Sigmoid colon (tissue), 7 donors: ENCODE measurements at regions of chr2 and their contacts with region 1.

Region 1: GRCh38 chr2:224357098-224357901 is 44.6 kb downstream of the FAM124B start:
- DNase-seq: no peak
- H3K4me3 ChIP-seq: no peak overlapping the region
- H3K27ac ChIP-seq: no peak overlapping the region
- H3K4me1 ChIP-seq: no peaks in the 10 kb centered on the region
- H3K27me3 ChIP-seq: no peaks in the 10 kb centered on the region
- CTCF ChIP-seq: peak; percentile 61 to 79 (median 70)
- EP300 ChIP-seq: no peak
- POLR2A ChIP-seq: no peak

Region 2: GRCh38 chr2:224412141-224413015 is 55.1 kb after region 1 on chr2:
- intact Hi-C with region 1: no loop called
- DNase-seq: no peak
- H3K4me3 ChIP-seq: no peak overlapping the region
- H3K27ac ChIP-seq: no peak overlapping the region
- H3K4me1 ChIP-seq: no peaks in the 10 kb centered on the region
- H3K27me3 ChIP-seq: no peaks in the 10 kb centered on the region
- CTCF ChIP-seq: no peak
- EP300 ChIP-seq: no peak
- POLR2A ChIP-seq: no peak

Region 3: GRCh38 chr2:224498991-224499390 is 141.7 kb after region 1 on chr2:
- intact Hi-C with region 1: no loop called
- DNase-seq: no peak
- H3K4me3 ChIP-seq: no peak overlapping the region
- H3K27ac ChIP-seq: no peak overlapping the region
- H3K4me1 ChIP-seq: no peaks in the 10 kb centered on the region
- H3K27me3 ChIP-seq: no peaks in the 10 kb centered on the region
- CTCF ChIP-seq: no peak
- EP300 ChIP-seq: no peak
- POLR2A ChIP-seq: no peak

Region 4: GRCh38 chr2:224650815-224651439 is 293.6 kb after region 1 on chr2:
- intact Hi-C with region 1: loop called (anchors 1 kb)
- DNase-seq: no peak
- H3K4me3 ChIP-seq: no peak overlapping the region
- H3K27ac ChIP-seq: no peak overlapping the region
- H3K4me1 ChIP-seq: no peaks in the 10 kb centered on the region
- H3K27me3 ChIP-seq: no peaks in the 10 kb centered on the region
- CTCF ChIP-seq: peak; percentile 53 to 81 (median 66)
- EP300 ChIP-seq: no peak
- POLR2A ChIP-seq: no peak

Region 5: GRCh38 chr2:224778474-224778877 is 421.2 kb after region 1 on chr2:
- intact Hi-C with region 1: loop called (anchors 5 kb)
- DNase-seq: no peak
- H3K4me3 ChIP-seq: no peak overlapping the region
- H3K27ac ChIP-seq: no peak overlapping the region
- H3K4me1 ChIP-seq: no peaks in the 10 kb centered on the region
- H3K27me3 ChIP-seq: no peaks in the 10 kb centered on the region
- CTCF ChIP-seq: peak in 3 of 4 experiments; percentile 37 to 70 (median 39)
- EP300 ChIP-seq: no peak
- POLR2A ChIP-seq: no peak